ENCODE measurements at regions of chr6 and their contacts with region 1.

Region 1: DNA sequence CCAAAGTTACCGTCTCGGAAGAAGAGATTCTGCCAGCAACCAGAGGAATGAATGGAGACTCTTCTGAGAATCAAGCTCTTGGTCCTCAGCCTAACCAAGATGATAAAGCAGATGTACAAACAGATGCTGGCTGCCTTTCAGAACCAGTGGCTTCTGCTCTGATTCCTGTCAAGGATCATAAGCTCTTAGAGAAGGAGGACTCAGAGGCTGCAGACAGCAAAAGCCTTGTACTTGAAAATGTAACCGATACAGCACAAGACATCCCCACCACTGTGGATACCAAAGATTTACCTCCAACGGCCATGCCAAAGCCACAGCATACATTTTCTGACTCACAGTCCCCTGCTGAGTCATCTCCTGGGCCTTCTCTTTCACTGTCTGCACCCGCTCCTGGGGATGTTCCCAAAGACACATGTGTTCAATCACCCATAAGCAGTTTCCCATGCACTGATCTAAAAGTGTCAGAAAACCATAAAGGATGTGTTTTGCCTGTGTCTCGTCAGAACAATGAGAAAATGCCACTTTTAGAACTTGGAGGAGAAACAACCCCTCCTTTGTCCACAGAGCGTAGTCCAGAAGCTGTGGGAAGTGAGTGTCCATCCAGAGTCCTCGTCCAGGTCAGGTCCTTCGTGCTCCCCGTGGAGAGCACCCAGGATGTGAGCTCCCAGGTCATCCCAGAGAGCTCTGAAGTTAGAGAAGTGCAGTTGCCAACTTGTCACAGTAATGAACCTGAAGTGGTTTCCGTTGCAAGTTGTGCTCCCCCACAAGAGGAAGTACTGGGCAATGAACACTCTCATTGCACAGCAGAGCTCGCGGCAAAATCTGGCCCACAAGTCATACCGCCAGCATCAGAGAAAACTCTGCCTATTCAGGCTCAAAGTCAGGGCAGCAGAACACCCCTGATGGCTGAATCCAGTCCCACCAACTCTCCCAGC is 109.6 kb downstream of the RTN4IP1 start:
- DNase-seq: no peak
- H3K4me3 Mint-ChIP-seq: no peak overlapping the region
- H3K27ac Mint-ChIP-seq: peak overlapping the region; percentile 30
- H3K4me1 Mint-ChIP-seq: peaks cover 62% of the 10 kb centered on the region
- H3K27me3 Mint-ChIP-seq: no peaks in the 10 kb centered on the region
- CTCF ChIP-seq: no peak

Region 2: DNA sequence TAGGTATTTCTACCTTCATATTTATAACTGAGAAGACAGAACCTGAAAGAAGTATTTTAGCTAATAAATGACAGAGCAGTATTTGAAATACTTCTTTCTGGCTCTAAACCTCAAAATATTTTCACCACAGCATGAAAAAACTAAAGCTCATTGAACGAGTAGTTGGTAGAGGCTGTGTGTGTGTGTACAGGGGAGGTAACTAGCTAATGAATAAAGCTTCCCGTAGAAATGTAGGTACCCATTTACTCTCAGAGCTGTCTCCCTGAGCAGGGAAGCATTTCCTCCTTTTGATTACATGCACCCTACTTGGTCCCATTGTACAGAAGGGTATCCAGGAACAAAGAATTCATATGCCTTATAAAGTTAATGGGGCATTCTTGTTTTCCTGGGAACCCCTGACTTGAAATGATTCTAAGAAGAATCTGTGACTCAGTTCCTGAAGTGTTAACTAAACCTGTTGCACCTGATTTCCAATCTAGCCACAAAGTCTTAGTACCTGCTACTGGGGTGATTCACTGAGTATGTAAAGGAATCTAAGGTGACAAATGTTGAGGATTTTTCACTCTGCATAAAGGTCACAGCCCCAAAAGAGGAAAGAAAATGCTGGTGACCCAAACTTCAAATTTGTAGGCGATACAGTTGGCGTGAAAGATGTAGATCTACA is 146.8 kb before region 1 on chr6:
- CTCF ChIA-PET with region 1: no interaction called
- intact Hi-C with region 1: loop called (anchors 5 kb)
- DNase-seq: no peak
- H3K4me3 Mint-ChIP-seq: no peak overlapping the region
- H3K27ac Mint-ChIP-seq: peak overlapping the region; percentile 78
- H3K4me1 Mint-ChIP-seq: peaks cover 61% of the 10 kb centered on the region
- H3K27me3 Mint-ChIP-seq: no peaks in the 10 kb centered on the region
- CTCF ChIP-seq: no peak

Region 3: DNA sequence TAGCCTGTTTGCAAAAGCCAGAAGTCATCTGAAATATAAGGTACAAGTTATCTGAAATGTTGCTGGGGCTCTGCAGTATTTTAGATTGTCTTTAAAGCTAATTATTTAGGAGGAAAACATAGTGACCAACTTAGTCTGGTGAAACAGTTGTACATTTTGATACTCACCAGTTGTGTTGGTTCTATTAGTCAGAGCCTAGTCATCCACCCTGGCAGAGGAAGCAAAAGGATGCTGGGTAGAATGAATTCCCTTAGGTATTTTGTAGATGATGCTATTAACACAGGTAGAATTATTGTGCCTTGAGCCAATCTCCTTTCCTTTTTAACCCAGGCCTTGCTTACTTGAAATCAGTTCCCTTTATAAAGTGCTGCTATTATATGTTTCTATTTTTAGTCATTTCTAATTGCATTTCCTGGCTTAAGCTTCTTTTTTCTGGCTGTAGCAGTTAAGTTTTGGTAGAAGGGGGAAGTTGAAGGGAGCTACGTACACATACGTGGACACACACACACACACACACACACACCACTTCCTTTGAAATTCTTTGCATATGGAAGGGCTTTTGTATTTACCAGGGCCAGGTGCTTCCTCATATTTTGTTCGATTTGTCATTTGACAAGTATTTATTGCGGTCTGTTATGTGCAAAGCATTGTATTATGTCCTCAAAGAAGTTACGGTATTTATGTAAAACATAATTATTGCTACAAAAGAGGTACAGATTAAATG is 27.1 kb after region 1 on chr6:
- CTCF ChIA-PET with region 1: interaction called, 10 read pairs
- intact Hi-C with region 1: loop called (anchors 2 kb)
- DNase-seq: peak; percentile 54
- H3K4me3 Mint-ChIP-seq: peak overlapping the region; percentile 21
- H3K27ac Mint-ChIP-seq: peak overlapping the region; percentile 95
- H3K4me1 Mint-ChIP-seq: peaks cover 34% of the 10 kb centered on the region
- H3K27me3 Mint-ChIP-seq: no peaks in the 10 kb centered on the region
- CTCF ChIP-seq: no peak

Region 4: GRCh38 chr6:106560996-106561685 is 41.4 kb after region 1 on chr6:
- CTCF ChIA-PET with region 1: no interaction called
- intact Hi-C with region 1: no loop called
- DNase-seq: no peak
- H3K4me3 Mint-ChIP-seq: no peak overlapping the region
- H3K27ac Mint-ChIP-seq: no peak overlapping the region
- H3K4me1 Mint-ChIP-seq: no peaks in the 10 kb centered on the region
- H3K27me3 Mint-ChIP-seq: no peaks in the 10 kb centered on the region
- CTCF ChIP-seq: no peak